ENCODE measurements at regions of chr13 and their contacts with region 1.

Region 1: DNA sequence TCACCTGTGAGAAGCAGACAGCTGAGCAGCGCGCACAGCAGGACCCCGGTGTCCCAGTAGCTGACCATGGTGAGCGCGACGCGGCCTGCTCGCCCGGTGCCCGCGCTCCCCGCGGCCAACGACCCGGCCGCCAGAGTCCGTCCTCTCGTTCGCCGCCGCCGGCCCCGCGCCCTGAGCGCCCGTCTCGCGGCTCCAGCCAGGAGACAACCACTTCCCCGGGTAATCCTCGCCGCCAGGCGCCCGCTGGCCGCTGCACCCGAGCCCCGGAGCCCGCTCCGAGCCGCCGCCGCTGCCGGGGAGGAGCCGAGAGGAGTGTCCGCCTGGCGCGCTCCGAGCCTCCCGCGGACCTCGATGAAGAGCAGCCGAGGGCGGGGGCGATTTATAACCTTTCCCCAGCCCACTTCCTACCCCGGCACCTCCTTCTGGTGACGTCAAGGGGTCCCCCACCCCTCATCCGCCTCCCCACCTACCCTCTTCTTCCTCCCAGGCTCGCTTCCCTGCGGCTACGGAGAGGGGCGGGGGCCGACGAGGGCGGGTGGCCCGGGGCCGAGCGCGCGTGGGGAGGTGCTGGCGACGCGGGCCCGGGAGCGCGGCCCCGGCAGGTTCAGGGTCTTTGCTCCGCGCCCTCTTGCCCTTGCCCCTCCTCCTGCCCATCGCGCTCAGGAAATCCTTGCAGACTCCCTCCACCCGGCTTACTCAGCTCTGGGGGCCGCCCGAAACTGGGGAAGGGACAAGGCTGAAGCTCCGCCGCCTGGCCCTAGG is at the start of gene FLT1:
- DNase-seq: peak; percentile 79 to 88
- ATAC-seq: peak; percentile 78 to 91 (median 84)
- H3K4me3 ChIP-seq: peak within 1 kb of the TSS; percentile 62 to 86 (median 74)
- H3K27ac ChIP-seq: peak within 1 kb of the TSS; percentile 85 to 98 (median 92)
- H3K4me1 ChIP-seq: peaks cover 0 to 61% (median 18%) of the 10 kb centered on the region in 9 donors
- H3K27me3 ChIP-seq: peaks cover 0 to 89% (median 59%) of the 10 kb centered on the region in 7 donors
- CTCF ChIP-seq: peak in 1 of 9 donors; percentile 7
- total RNA-seq, gene FLT1: 34.9 to 76.3 (median 47.2) TPM

Region 2: DNA sequence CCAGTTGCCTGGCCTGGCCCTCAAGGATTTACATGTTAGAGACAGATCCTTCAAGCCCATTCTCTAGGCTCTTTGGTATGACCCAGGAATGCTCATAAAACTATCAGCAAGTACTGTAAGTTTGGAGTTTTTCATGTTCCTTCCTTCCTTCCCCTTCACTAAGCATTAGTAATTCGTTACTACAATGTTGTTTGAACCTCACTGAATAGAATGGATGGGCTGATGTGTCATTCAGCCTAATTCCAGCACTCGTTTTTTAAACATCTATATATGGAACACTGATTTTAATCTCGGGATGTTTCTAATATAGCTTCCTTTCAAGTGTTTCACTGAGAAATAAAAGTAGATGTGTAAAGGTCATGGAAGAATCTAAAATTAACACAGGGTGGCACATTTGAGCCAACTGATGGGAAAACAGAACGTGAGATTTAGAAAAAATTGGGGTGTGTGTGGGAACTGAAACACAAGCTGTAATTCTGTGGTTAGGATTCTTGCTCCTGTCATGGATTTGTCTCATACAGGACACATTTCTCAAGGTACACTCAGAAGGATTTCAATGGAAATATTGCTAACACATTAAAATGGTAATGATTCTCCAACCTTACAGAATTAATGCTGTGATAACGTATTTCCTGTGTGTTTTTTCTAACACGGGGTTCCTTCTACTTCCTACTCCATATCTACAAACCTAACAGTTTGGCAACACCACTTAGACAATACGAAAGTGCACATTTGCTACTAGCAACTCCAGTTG is 93.5 kb before region 1 on chr13:
- intact Hi-C with region 1: loop called in 3 of 10 experiments (anchors 5 to 10 kb)
- DNase-seq: no peak
- ATAC-seq: peak in 6 of 8 donors; percentile 28 to 83 (median 68)
- H3K4me3 ChIP-seq: peak overlapping the region in 1 of 10 donors; percentile 0
- H3K27ac ChIP-seq: peak overlapping the region in 7 of 10 donors; percentile 3 to 70 (median 52)
- H3K4me1 ChIP-seq: peaks cover 0 to 71% (median 28%) of the 10 kb centered on the region in 9 donors
- H3K27me3 ChIP-seq: no peaks in the 10 kb centered on the region
- CTCF ChIP-seq: no peak

Region 3: DNA sequence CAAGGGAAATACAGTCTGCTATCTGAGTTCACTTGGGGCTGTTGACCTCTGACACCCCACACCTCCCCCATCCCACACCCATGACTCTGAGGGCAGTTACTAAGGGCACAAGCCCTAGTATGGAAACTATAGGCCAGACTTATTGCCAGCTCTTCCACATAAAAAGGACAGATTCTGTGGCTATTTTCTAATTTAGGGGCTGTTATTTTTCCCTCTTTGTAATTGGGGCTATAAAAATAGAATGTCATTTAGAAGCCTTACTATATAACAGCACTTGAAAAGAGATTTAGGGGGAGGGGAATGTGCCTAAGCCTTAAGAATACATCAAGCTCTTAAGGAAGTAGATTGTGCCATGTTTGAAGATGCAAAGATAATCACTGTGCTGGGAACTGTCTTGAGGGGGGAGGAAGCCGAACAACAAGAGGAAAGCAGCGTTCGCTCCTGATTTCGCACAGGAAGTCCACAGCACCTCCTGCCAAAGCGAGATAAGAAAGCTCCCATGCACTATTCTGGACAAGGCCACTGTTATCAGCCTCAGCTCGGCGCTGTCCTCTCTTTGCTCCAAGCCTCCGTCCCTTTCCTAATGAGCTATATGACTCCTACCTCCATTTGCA is 86.6 kb before region 1 on chr13:
- intact Hi-C with region 1: loop called in 4 of 10 experiments (anchors 2 to 10 kb)
- DNase-seq: peak; percentile 57 to 88
- ATAC-seq: peak; percentile 86 to 97 (median 90)
- H3K4me3 ChIP-seq: peak overlapping the region in 1 of 10 donors; percentile 3
- H3K27ac ChIP-seq: peak overlapping the region; percentile 15 to 86 (median 62)
- H3K4me1 ChIP-seq: peaks cover 0 to 76% (median 45%) of the 10 kb centered on the region in 9 donors
- H3K27me3 ChIP-seq: peaks cover 0 to 6% (median 0%) of the 10 kb centered on the region in 7 donors
- CTCF ChIP-seq: peak in 3 of 9 donors; percentile 21 to 34 (median 23)

Region 4: DNA sequence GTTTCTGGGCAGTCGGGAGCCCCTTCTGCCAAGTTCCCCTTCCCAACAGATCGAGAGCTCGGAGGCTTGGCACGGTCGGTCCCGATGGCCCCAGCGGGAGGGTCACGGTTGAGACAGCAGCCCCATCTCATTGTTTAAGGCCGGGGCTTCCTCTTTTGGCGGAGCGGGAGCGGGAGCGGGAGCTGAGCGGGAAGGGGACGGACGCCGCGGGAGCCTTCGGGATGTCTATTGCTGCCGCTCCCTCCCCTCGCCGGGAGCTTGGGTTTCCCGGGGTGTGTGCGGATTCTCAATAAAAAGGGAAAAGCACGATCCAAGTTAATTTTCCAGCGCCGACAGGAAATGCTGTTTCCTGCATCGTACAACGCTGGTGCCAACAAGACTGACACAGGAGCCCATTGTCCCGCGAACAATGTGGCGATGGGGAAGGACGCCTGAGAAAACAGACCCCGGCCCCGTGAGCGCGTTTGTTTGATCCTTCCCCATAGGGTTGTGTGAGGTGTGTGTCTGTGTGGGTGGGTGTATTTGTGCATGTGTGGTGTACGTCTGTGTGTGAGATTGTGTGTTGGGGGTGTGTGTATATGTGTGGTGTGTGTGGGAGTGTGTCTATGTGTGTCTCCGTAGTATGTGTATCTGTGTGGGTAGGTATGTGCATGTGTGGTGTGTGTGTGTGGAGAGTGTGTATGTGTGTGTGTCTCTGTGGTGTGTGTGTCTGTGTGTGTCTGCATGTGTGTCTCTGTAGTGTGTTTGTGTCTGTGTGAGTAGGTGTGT is 36.3 kb after region 1 on chr13:
- intact Hi-C with region 1: loop called in 6 of 10 experiments (anchors 2 to 5 kb)
- DNase-seq: peak; percentile 72 to 80
- ATAC-seq: peak; percentile 56 to 83 (median 72)
- H3K4me3 ChIP-seq: peak overlapping the region in 9 of 10 donors; percentile 43 to 65 (median 54)
- H3K27ac ChIP-seq: peak overlapping the region; percentile 53 to 91 (median 86)
- H3K4me1 ChIP-seq: peaks cover 0 to 43% (median 15%) of the 10 kb centered on the region in 9 donors
- H3K27me3 ChIP-seq: peaks cover 0 to 67% (median 20%) of the 10 kb centered on the region in 7 donors
- CTCF ChIP-seq: no peak

Region 5: DNA sequence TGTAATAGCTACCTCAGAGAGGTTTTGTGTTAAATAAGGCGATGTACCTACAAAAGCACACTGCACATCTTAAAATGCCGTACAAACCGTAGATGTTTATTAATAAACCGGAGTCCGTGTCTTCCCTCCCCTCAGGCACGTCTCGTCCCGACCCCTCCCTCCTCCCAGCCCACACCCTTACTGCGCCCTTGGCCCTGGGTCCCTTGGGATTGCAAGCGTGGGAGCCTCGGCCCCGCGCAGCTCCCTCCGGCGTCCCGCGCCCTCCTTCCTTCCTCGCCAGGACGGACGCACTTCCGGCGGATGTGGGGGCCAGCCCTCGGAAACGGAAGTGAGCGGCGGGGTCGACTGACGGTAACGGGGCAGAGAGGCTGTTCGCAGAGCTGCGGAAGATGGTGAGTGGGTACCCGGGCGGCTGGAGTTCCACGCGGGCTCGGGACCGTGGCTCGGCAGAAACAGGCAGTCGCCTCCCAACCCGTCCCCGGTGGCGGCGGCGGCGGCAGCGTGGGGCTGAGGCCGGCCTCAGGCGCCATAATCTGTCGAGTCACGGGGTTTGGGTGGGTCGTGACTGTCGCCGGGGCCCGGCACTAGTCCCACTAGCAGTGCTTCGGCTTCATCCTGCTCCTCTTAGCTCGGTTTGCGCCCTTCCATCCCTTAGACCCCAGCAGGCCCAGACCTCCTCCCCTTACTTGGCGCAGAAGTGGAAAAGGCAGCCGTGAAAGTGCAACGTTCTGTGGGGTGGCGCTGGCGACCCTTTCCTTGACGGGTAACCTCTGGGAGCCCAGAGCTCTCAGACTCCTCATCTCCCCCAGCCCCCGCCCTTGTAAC is 164.1 kb after region 1 on chr13 and contains the start of gene POMP:
- intact Hi-C with region 1: loop called in 1 of 10 experiments (anchors 5 kb)
- DNase-seq: peak; percentile 96
- ATAC-seq: peak; percentile 96 to 99 (median 98)
- H3K4me3 ChIP-seq: peak within 1 kb of the TSS; percentile 74 to 95 (median 89)
- H3K27ac ChIP-seq: peak within 1 kb of the TSS; percentile 83 to 99 (median 98)
- H3K4me1 ChIP-seq: peaks cover 11 to 72% (median 51%) of the 10 kb centered on the region in 9 donors
- H3K27me3 ChIP-seq: no peaks in the 10 kb centered on the region
- CTCF ChIP-seq: no peak
- total RNA-seq, gene POMP: 91.7 to 120 (median 101) TPM